Esophagus squamous epithelium (tissue), 5 donors: ENCODE measurements at regions of chr14 and their contacts with region 1.

Region 1: GRCh38 chr14:34883954-34884353 is 8.8 kb upstream of the BAZ1A start:
- DNase-seq: no peak
- H3K4me3 ChIP-seq: no peak overlapping the region
- H3K27ac ChIP-seq: no peak overlapping the region
- H3K4me1 ChIP-seq: no peaks in the 10 kb centered on the region
- H3K27me3 ChIP-seq: no peaks in the 10 kb centered on the region
- CTCF ChIP-seq: no peak
- POLR2A ChIP-seq: no peak

Region 2: DNA sequence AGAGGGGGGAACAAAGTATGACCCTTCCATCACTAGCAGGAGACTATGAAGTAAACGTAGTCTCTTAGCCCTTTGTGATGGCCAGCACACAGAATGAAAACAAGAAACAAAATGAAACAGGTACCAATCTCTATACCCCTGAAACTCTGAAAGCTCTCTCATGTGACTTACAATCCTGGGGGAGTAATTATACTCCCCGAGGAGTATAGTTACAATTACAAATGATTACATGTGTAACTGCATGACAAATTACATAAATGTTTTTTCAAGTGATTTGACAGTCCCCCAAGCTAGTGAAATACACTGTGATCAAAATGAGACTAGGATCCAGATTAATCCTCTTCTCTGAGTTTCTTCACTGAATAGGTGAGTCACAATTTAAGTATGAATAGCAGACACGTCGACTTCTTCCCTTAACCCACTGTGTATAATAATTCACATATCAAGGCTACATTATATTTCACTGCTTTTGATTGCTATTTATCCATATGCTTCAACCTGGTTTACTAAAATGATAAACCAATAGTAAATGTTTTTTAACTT is 495.9 kb before region 1 on chr14:
- intact Hi-C with region 1: no loop called
- DNase-seq: no peak
- H3K4me3 ChIP-seq: no peak overlapping the region
- H3K27ac ChIP-seq: peak overlapping the region in 1 of 4 donors; percentile 3
- H3K4me1 ChIP-seq: peaks cover 3 to 11% (median 4%) of the 10 kb centered on the region in 3 donors
- H3K27me3 ChIP-seq: peaks cover 0 to 23% (median 0%) of the 10 kb centered on the region in 4 donors
- CTCF ChIP-seq: no peak
- POLR2A ChIP-seq: no peak

Region 3: GRCh38 chr14:34971381-34971780 is 87.4 kb after region 1 on chr14:
- intact Hi-C with region 1: loop called (anchors 10 kb)
- DNase-seq: no peak
- H3K4me3 ChIP-seq: no peak overlapping the region
- H3K27ac ChIP-seq: no peak overlapping the region
- H3K4me1 ChIP-seq: no peaks in the 10 kb centered on the region
- H3K27me3 ChIP-seq: no peaks in the 10 kb centered on the region
- CTCF ChIP-seq: no peak
- POLR2A ChIP-seq: no peak